OCI-LY7 (cell line): ENCODE measurements at regions of chr19 and their contacts with region 1.

Region 1: GRCh38 chr19:10580979-10581631 is 6.0 kb downstream of the AP1M2 start:
- DNase-seq: peak; percentile 98
- H3K4me3 ChIP-seq: no peak overlapping the region
- H3K27ac ChIP-seq: no peak overlapping the region
- H3K4me1 ChIP-seq: peaks cover 31% of the 10 kb centered on the region
- CTCF ChIP-seq: peak; percentile 100

Region 2: DNA sequence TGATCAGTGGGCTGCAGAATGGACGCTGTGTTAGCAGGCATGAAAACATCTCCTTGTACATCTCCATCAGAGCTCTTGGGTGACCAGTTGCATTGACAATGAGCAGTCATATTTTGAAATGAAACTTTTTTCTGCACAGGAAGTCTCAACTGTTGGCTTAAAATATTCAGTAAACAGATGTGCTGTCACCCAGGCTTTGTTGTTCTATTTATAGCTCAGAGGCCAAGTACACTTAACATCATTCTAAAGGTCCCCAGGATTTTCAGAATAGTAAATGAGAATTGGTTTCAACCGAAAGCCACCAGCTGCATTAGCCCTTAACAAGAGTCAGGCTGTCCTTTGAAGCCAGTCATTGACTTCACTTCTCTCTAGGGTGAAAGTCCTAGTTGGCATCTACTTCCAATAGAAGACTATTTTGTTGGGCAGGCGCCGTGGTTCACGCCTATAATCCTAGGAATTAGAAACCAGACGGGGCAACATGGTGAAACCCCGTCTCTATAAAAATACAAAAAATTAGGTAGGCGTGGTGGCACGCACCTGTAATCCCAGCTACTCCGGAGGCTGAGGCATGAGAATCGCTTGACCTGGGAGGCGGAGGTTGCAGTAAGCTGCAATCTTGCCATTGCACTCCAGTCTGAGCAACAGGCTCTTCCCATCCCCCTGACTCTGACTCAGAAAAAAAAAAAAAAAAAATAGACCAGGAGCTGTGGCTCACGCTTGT is 168.7 kb before region 1 on chr19:
- CTCF ChIA-PET with region 1: no interaction called
- POLR2A ChIA-PET with region 1: no interaction called
- intact Hi-C with region 1: no loop called
- DNase-seq: peak; percentile 99
- H3K4me3 ChIP-seq: peak overlapping the region; percentile 61
- H3K27ac ChIP-seq: peak overlapping the region; percentile 100
- H3K4me1 ChIP-seq: peaks cover 94% of the 10 kb centered on the region
- CTCF ChIP-seq: no peak

Region 3: GRCh38 chr19:10523135-10523636 is 57.9 kb before region 1 on chr19:
- CTCF ChIA-PET with region 1: no interaction called
- POLR2A ChIA-PET with region 1: no interaction called
- intact Hi-C with region 1: no loop called
- DNase-seq: no peak
- H3K4me3 ChIP-seq: no peak overlapping the region
- H3K27ac ChIP-seq: no peak overlapping the region
- H3K4me1 ChIP-seq: peaks cover 5% of the 10 kb centered on the region
- CTCF ChIP-seq: no peak

Region 4: GRCh38 chr19:10602330-10603083 is 21.4 kb after region 1 on chr19:
- CTCF ChIA-PET with region 1: interaction called, 5 read pairs
- POLR2A ChIA-PET with region 1: interaction called, 22 read pairs
- intact Hi-C with region 1: loop called (anchors 2 kb)
- DNase-seq: peak; percentile 90
- H3K4me3 ChIP-seq: peak overlapping the region; percentile 93
- H3K27ac ChIP-seq: peak overlapping the region; percentile 93
- H3K4me1 ChIP-seq: peaks cover 54% of the 10 kb centered on the region
- CTCF ChIP-seq: no peak

Region 5: GRCh38 chr19:10644260-10645007 is 63.3 kb after region 1 on chr19:
- CTCF ChIA-PET with region 1: interaction called, 39 read pairs
- POLR2A ChIA-PET with region 1: interaction called, 10 read pairs
- intact Hi-C with region 1: loop called (anchors 1 kb)
- DNase-seq: peak; percentile 85
- H3K4me3 ChIP-seq: no peak overlapping the region
- H3K27ac ChIP-seq: peak overlapping the region; percentile 18
- H3K4me1 ChIP-seq: peaks cover 13% of the 10 kb centered on the region
- CTCF ChIP-seq: peak; percentile 89

Region 6: GRCh38 chr19:10653715-10654492 is 72.8 kb after region 1 on chr19 and contains the start of gene ILF3:
- CTCF ChIA-PET with region 1: interaction called, 4 read pairs
- POLR2A ChIA-PET with region 1: interaction called, 3 read pairs
- intact Hi-C with region 1: loop called (anchors 2 kb)
- DNase-seq: peak; percentile 100
- H3K4me3 ChIP-seq: peak within 1 kb of the TSS; percentile 100
- H3K27ac ChIP-seq: peak within 1 kb of the TSS; percentile 88
- H3K4me1 ChIP-seq: peaks cover 41% of the 10 kb centered on the region
- CTCF ChIP-seq: no peak
- total RNA-seq, gene ILF3: 308 and 347 TPM in 2 replicates

Region 7: GRCh38 chr19:10699650-10700335 is 118.7 kb after region 1 on chr19:
- CTCF ChIA-PET with region 1: interaction called, 24 read pairs
- POLR2A ChIA-PET with region 1: no interaction called
- intact Hi-C with region 1: loop called (anchors 1 kb)
- DNase-seq: peak; percentile 85
- H3K4me3 ChIP-seq: no peak overlapping the region
- H3K27ac ChIP-seq: no peak overlapping the region
- H3K4me1 ChIP-seq: peaks cover 14% of the 10 kb centered on the region
- CTCF ChIP-seq: peak; percentile 84

Region 8: DNA sequence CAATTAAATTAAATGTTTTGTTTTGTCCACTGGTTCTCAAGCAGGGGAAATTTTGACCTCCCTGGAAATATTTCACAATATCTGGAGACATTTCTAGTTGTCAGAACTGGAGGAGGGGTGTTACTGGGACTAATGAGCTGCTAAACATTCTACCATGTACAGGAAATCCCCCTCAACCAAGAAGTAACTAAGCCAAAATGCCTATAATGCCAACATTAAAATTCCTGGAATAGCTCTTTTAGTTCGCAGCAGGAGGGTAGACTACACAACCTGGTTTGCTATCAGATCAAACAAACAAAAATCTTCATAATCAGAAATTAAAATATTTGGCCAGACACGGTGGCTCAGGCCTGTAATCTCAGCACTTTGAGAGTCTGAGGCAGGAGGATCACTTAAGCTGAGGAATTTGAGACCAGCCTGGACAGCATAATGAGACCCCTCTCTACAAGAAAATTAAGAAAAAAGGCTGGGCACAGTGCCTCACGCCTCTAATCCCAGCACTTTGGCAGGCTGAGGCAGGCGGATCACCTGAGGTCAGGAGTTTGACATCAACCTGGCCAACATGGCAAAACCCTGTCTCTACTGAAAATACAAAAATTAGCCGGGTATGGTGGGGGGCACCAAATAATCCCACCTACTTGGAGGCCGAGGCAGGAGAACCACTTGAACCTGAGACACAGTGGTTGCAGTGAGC is 366.0 kb after region 1 on chr19:
- CTCF ChIA-PET with region 1: no interaction called
- POLR2A ChIA-PET with region 1: no interaction called
- intact Hi-C with region 1: no loop called
- DNase-seq: no peak
- H3K4me3 ChIP-seq: no peak overlapping the region
- H3K27ac ChIP-seq: no peak overlapping the region
- H3K4me1 ChIP-seq: peaks cover 23% of the 10 kb centered on the region
- CTCF ChIP-seq: no peak